ENCODE measurements at regions of chr6 and their contacts with region 1.

Region 1: GRCh38 chr6:110873981-110874879 is at the start of gene AMD1:
- DNase-seq: peak; percentile 85
- ATAC-seq: peak; percentile 73
- H3K4me3 ChIP-seq: peak within 1 kb of the TSS; percentile 94
- H3K27ac ChIP-seq: peak within 1 kb of the TSS; percentile 93
- H3K4me1 ChIP-seq: peaks cover 16% of the 10 kb centered on the region
- H3K27me3 ChIP-seq: no peaks in the 10 kb centered on the region
- CTCF ChIP-seq: no peak
- EP300 ChIP-seq: no peak
- POLR2A ChIP-seq: peak; percentile 98
- RAD21 ChIP-seq: no peak
- polyA plus RNA-seq, gene AMD1: 59.6 to 75.5 TPM

Region 2: GRCh38 chr6:110528101-110528929 is 345.9 kb before region 1 on chr6:
- CTCF ChIA-PET with region 1: interaction called, 12 read pairs
- POLR2A ChIA-PET with region 1: interaction called, 3 read pairs
- RAD21 ChIA-PET with region 1: interaction called, 9 read pairs
- SMC1A ChIA-PET with region 1: interaction called, 5 read pairs
- in situ Hi-C with region 1: no loop called
- intact Hi-C with region 1: loop called (anchors 5 kb)
- DNase-seq: peak; percentile 28
- ATAC-seq: peak; percentile 89
- H3K4me3 ChIP-seq: no peak overlapping the region
- H3K27ac ChIP-seq: no peak overlapping the region
- H3K4me1 ChIP-seq: no peaks in the 10 kb centered on the region
- H3K27me3 ChIP-seq: peaks cover 0 to 1% of the 10 kb centered on the region in 2 experiments; a peak in 2 of 4 replicates
- CTCF ChIP-seq: peak; percentile 47 to 88 (median 73); a peak in 5 of 6 replicates
- EP300 ChIP-seq: no peak
- POLR2A ChIP-seq: no peak
- RAD21 ChIP-seq: peak; percentile 93

Region 3: DNA sequence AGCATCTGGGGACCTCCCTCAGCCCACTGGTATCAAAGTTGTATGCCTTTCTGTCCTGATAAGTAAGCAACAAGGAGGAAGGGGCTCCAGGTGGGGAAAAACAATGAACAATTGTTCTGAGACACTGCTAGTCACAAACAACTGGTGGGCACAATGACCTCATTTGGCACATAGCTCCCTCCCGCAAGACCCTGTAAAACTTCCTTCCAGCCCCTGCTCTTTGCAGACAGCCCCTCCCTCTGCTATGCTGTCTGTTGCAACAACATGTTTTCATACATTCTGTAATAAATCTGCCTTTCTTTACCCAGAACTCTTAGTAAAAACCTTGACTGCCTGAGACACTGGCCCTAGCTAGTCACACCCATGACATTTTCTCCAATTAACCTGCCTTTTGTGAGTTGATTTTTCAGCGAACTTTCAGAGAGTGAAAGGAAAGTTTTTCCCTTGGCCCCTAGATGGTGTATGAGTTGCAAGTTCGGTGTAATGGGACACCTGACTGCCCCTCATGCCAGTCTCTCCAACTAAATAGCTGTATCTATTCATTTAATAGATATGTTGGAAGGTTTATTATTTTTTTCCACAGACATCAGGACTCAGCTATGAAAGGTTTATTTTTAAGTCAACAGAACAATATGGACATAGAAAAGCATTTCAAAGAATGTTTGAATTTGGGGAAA is 255.5 kb before region 1 on chr6:
- CTCF ChIA-PET with region 1: interaction called, 10 read pairs
- POLR2A ChIA-PET with region 1: no interaction called
- RAD21 ChIA-PET with region 1: interaction called, 3 read pairs
- SMC1A ChIA-PET with region 1: interaction called, 5 read pairs
- in situ Hi-C with region 1: no loop called
- intact Hi-C with region 1: no loop called
- DNase-seq: peak; percentile 11
- ATAC-seq: peak; percentile 71
- H3K4me3 ChIP-seq: no peak overlapping the region
- H3K27ac ChIP-seq: no peak overlapping the region
- H3K4me1 ChIP-seq: peaks cover 11% of the 10 kb centered on the region
- H3K27me3 ChIP-seq: no peaks in the 10 kb centered on the region
- CTCF ChIP-seq: peak in 2 of 3 experiments; percentile 34 to 48; a peak in 4 of 6 replicates
- EP300 ChIP-seq: no peak
- POLR2A ChIP-seq: no peak
- RAD21 ChIP-seq: peak; percentile 47

Region 4: DNA sequence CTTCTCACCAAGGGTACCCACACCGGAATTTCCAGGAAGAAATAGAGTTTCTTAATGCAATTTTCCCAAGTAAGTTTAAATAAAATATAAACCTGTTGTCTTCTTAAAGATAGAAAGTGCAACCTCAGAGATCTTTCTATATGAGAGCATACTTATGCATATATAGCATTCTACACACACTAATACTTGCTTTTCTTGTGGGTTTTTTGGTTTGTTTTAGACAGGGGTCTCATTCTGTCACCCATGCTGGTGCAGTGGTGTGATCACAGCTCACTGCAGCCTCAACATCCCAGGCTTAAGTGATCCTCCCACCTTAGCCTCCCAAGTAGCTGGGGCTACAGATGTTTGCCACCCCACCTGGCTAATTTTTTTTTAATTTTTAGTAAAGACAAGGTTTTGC is 16.1 kb after region 1 on chr6:
- CTCF ChIA-PET with region 1: interaction called, 10 read pairs
- POLR2A ChIA-PET with region 1: interaction called, 8 read pairs
- RAD21 ChIA-PET with region 1: interaction called, 4 read pairs
- SMC1A ChIA-PET with region 1: interaction called, 32 read pairs
- in situ Hi-C with region 1: no loop called
- intact Hi-C with region 1: no loop called
- DNase-seq: no peak
- ATAC-seq: no peak
- H3K4me3 ChIP-seq: no peak overlapping the region
- H3K27ac ChIP-seq: no peak overlapping the region
- H3K4me1 ChIP-seq: peaks cover 15% of the 10 kb centered on the region
- H3K27me3 ChIP-seq: no peaks in the 10 kb centered on the region
- CTCF ChIP-seq: no peak
- EP300 ChIP-seq: no peak
- POLR2A ChIP-seq: no peak
- RAD21 ChIP-seq: no peak

Region 5: DNA sequence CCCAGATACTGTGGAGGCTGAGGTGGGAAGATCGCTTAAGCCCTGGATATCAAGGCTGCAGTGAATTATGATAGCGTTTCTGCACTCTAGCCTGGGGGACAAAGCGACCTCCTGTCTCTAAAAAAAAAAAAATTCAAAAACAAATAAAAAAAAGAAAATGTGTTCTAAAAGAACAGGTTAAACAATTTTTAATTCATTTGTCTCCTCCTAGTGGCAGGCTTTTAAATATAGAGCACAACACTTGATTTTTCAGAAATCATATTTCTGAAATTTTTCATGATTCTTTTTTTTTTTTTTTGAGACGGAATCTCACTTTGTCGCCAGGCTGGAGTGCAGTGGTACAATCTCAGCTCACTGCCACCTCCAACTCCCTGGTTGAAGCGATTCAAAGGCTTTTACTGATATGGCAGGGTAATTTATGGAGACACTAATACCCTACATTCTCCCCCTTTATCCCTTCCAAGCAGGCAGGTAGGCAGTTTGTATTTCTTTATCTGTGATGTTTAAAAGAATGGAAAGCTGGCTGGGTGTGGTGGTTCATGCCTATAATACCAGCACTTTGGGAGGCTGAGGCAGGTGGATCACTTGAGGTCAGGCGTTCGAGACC is 75.6 kb after region 1 on chr6:
- CTCF ChIA-PET with region 1: interaction called, 15 read pairs
- POLR2A ChIA-PET with region 1: interaction called, 6 read pairs
- RAD21 ChIA-PET with region 1: interaction called, 9 read pairs
- SMC1A ChIA-PET with region 1: interaction called, 35 read pairs
- in situ Hi-C with region 1: no loop called
- intact Hi-C with region 1: loop called (anchors 2 kb)
- DNase-seq: no peak
- ATAC-seq: no peak
- H3K4me3 ChIP-seq: no peak overlapping the region
- H3K27ac ChIP-seq: no peak overlapping the region
- H3K4me1 ChIP-seq: peaks cover 6% of the 10 kb centered on the region
- H3K27me3 ChIP-seq: no peaks in the 10 kb centered on the region
- CTCF ChIP-seq: peak; percentile 27 to 58 (median 51); a peak in 4 of 6 replicates
- EP300 ChIP-seq: no peak
- POLR2A ChIP-seq: no peak
- RAD21 ChIP-seq: peak; percentile 64